ENCODE measurements at regions of chr11 and their contacts with region 1.

Region 1: DNA sequence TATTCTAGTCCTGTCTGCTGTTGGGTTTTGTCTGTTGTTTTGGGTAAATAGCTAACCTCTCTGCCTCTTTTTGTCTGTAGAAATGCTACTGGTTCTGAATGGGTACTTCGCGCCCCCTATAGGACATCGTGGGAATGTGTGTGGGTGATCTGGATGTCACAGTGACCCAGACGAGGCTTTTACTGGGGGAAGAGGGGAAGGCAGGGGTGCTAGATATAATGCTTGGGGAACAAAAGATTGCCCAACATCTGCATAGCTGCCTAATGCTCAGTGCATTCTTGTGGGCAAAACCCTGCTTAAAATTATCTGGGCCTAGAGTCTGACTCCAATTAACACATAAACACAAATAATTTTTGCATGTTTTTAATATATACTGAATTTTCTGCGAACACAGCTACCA is 57.7 kb downstream of the BMAL1 start:
- DNase-seq: peak; percentile 43 to 75
- ATAC-seq: peak; percentile 47

Region 2: GRCh38 chr11:13261591-13262061 is 73.7 kb before region 1 on chr11:
- intact Hi-C with region 1: loop called in 1 of 2 experiments (anchors 10 kb)
- DNase-seq: no peak
- ATAC-seq: no peak